Sigmoid colon (tissue), 7 donors: ENCODE measurements at regions of chr5 and their contacts with region 1.

Region 1: DNA sequence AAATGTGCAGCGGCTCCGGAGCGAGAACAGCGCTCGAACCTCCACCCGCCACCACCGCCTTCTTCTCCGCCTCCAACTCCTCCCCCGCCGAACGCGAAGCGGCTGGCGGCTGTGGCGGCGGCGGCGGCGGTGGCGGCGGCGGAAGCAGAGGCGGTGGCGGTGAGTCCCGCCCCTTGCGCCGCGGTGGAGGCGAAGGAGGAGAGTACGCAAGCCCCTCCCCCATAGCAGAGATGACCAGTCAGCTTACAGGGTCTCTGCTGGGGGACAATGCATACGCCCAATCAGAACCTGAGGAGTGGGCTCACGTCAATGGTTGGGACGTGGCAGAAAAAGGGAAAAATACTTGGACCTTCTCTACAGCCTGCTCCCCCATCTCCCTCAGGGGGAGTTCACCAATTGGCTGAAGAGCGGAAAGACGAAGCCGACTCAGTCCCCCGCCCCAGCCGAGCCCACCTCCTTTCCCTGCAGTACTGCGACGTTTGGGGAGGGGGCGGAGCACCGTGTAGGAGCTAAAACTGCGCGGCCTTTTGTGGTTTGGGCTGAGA is at the start of gene PJA2:
- DNase-seq: peak; percentile 100
- H3K4me3 ChIP-seq: peak within 1 kb of the TSS; percentile 70 to 89 (median 85)
- H3K27ac ChIP-seq: peak within 1 kb of the TSS; percentile 95 to 99 (median 98)
- H3K4me1 ChIP-seq: peaks cover 0 to 64% (median 56%) of the 10 kb centered on the region in 4 donors
- H3K27me3 ChIP-seq: no peaks in the 10 kb centered on the region
- CTCF ChIP-seq: peak in 2 of 4 experiments; percentile 29 to 32
- EP300 ChIP-seq: peak in 1 of 4 donors; percentile 58
- POLR2A ChIP-seq: peak; percentile 80 to 95
- total RNA-seq, gene PJA2: 163 to 213 (median 171) TPM

Region 2: GRCh38 chr5:108381954-108382783 is 1027.7 kb before region 1 on chr5 and contains the start of gene FBXL17:
- intact Hi-C with region 1: loop called (anchors 5 kb)
- DNase-seq: peak; percentile 97
- H3K4me3 ChIP-seq: peak within 1 kb of the TSS; percentile 84 to 96 (median 92)
- H3K27ac ChIP-seq: peak within 1 kb of the TSS; percentile 98 to 99 (median 99)
- H3K4me1 ChIP-seq: peaks cover 0 to 31% (median 20%) of the 10 kb centered on the region in 4 donors
- H3K27me3 ChIP-seq: no peaks in the 10 kb centered on the region
- CTCF ChIP-seq: no peak
- EP300 ChIP-seq: no peak
- POLR2A ChIP-seq: peak; percentile 64 to 69
- total RNA-seq, gene FBXL17: 16.6 to 22.5 (median 20.0) TPM

Region 3: GRCh38 chr5:109329333-109330237 is 80.3 kb before region 1 on chr5:
- intact Hi-C with region 1: loop called (anchors 5 kb)
- DNase-seq: no peak
- H3K4me3 ChIP-seq: no peak overlapping the region
- H3K27ac ChIP-seq: peak overlapping the region; percentile 66 to 83 (median 72)
- H3K4me1 ChIP-seq: peaks cover 0 to 52% (median 48%) of the 10 kb centered on the region in 4 donors
- H3K27me3 ChIP-seq: no peaks in the 10 kb centered on the region
- CTCF ChIP-seq: no peak
- EP300 ChIP-seq: no peak
- POLR2A ChIP-seq: no peak

Region 4: DNA sequence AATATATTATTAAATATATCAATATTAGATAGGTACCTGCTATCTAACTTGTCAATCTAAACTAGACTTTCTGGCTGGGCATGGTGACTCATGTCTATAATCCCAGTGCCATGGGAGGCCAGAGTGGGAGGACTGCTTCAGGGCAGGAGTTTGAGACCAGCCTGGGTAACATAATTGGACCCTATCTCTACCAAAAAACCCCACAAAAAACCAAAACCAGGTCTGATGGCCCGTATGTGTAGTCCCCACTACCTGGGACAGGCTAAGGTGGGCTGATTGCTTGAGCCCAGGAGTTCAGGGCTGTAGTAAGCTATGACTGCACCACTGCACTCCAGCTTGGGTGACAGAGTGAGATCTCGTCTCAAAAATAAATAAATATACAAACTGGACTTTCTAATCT is 55.2 kb before region 1 on chr5:
- intact Hi-C with region 1: loop called (anchors 10 kb)
- DNase-seq: no peak
- H3K4me3 ChIP-seq: no peak overlapping the region
- H3K27ac ChIP-seq: no peak overlapping the region
- H3K4me1 ChIP-seq: peaks cover 0 to 28% (median 18%) of the 10 kb centered on the region in 4 donors
- H3K27me3 ChIP-seq: no peaks in the 10 kb centered on the region
- CTCF ChIP-seq: no peak
- EP300 ChIP-seq: no peak
- POLR2A ChIP-seq: no peak

Region 5: GRCh38 chr5:109374625-109375024 is 35.3 kb before region 1 on chr5:
- intact Hi-C with region 1: loop called (anchors 5 kb)
- DNase-seq: no peak
- H3K4me3 ChIP-seq: no peak overlapping the region
- H3K27ac ChIP-seq: peak overlapping the region in 2 of 4 donors; percentile 23 to 42
- H3K4me1 ChIP-seq: peaks cover 0 to 80% (median 46%) of the 10 kb centered on the region in 4 donors
- H3K27me3 ChIP-seq: no peaks in the 10 kb centered on the region
- CTCF ChIP-seq: no peak
- EP300 ChIP-seq: no peak
- POLR2A ChIP-seq: no peak